ENCODE measurements at regions of chr3 and their contacts with region 1.

Region 1: DNA sequence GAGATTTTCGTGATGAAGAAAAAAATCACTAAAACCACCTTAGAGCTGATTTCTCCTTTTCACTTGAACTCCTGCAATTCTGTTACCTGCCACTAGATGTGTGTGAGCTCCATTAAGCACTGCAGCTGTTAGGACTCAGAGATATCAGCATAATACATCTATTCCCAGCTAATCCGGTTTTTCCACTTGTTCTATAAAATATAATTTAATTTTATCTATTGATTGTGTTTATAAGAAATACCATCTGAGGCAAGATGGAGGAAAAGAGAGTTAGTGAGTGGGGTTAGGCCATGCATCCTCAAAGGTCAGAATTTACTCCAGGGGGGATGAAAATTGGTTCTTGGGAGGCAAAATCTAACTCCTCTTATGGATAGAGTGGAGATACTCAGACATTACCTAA is 152.7 kb downstream of the IL20RB start:
- DNase-seq: peak; percentile 37
- H3K4me3 Mint-ChIP-seq: no peak overlapping the region
- H3K27ac Mint-ChIP-seq: no peak overlapping the region
- H3K4me1 Mint-ChIP-seq: no peaks in the 10 kb centered on the region
- H3K27me3 Mint-ChIP-seq: peaks cover 32% of the 10 kb centered on the region
- CTCF ChIP-seq: peak; percentile 74

Region 2: GRCh38 chr3:136532766-136533165 is 577.7 kb before region 1 on chr3:
- CTCF ChIA-PET with region 1: no interaction called
- intact Hi-C with region 1: no loop called
- DNase-seq: no peak
- H3K4me3 Mint-ChIP-seq: no peak overlapping the region
- H3K27ac Mint-ChIP-seq: no peak overlapping the region
- H3K4me1 Mint-ChIP-seq: no peaks in the 10 kb centered on the region
- H3K27me3 Mint-ChIP-seq: no peaks in the 10 kb centered on the region
- CTCF ChIP-seq: no peak

Region 3: GRCh38 chr3:137191133-137191923 is 80.8 kb after region 1 on chr3:
- CTCF ChIA-PET with region 1: no interaction called
- intact Hi-C with region 1: loop called (anchors 2 kb)
- DNase-seq: no peak
- H3K4me3 Mint-ChIP-seq: no peak overlapping the region
- H3K27ac Mint-ChIP-seq: no peak overlapping the region
- H3K4me1 Mint-ChIP-seq: no peaks in the 10 kb centered on the region
- H3K27me3 Mint-ChIP-seq: peaks cover 30% of the 10 kb centered on the region
- CTCF ChIP-seq: no peak